ENCODE measurements at regions of chr15 and their contacts with region 1.

Region 1: DNA sequence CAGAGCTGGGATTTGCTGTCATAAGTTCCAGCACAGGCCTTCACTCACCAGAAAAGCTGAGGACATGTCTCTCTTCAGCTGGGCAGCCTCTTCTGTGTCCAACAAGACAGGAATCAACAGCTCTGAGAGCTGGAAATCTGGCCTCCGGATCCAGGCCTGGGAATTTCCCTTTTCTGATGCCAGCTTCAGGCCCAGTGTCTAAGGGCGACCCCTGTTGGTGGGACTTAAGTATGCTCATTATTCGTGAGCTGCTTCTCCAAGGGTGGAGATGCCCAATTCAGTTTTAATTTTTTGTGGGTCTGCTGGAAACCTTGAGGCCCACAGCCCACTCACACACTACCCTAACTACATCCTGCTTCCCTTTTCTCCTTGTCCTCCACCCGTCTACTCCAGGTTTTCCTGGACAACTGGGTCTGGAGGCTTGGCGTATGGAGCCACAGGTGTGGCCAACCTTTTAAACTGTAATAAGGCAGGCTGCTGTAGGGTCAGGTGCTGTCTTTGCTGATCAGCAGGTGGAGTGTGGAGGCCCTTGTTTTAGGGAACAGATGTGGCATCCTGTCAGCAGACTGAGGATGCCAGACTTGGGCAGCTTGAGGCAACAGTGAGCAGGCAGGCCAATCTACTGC is 2.6 kb upstream of the CEMIP start:
- DNase-seq: peak; percentile 60 to 80
- ATAC-seq: peak; percentile 71 to 85 (median 74)
- H3K4me3 ChIP-seq: no peak overlapping the region
- H3K4me3 Mint-ChIP-seq: no peak overlapping the region
- H3K27ac ChIP-seq: no peak overlapping the region
- H3K27ac Mint-ChIP-seq: no peak overlapping the region
- H3K4me1 ChIP-seq: peaks cover 4% of the 10 kb centered on the region
- H3K4me1 Mint-ChIP-seq: peaks cover 0 to 9% of the 10 kb centered on the region in 2 donors
- H3K27me3 ChIP-seq: peaks cover 10% of the 10 kb centered on the region
- H3K27me3 Mint-ChIP-seq: peaks cover 20 to 33% of the 10 kb centered on the region in 2 donors
- CTCF ChIP-seq: peak; percentile 81

Region 2: DNA sequence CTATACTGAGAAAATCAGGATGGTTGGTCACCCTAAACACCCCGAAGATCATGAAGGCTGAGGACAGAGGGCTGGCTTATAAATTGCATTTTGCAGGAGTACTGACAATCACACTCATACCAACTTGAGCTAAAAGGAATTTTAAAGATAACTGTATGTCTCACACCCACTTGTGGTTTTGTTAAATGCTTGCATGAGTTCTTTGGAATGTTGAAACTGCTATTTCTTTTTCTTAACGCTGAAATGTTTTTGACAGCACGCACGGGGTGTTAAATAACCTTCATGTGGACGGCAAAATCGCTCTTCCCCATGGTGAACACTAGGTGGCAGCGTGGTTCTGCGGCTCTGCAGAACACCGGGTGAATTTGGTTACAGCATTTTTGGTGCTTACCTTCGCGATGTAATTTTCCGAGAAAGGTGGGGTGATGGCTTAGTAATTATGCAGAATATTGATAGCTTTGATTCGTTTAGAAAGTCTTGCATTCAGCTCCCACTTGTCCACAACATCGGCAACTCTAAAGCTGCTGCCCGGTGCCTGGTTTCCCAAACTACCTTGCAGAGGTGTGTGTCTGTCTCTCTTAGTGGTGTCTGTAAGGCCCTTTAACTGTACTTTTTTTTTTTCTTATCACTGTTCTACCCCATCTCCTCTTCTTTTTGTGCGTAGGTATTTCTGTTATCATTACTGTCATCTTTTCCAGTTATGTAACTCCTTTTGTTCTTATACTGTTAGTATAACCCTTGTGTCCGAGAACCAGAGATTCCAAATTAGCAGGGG is 320.7 kb before region 1 on chr15:
- intact Hi-C with region 1: loop called (anchors 1 kb)
- DNase-seq: peak; percentile 30 to 83
- ATAC-seq: peak; percentile 60 to 87 (median 74)
- H3K4me3 ChIP-seq: no peak overlapping the region
- H3K4me3 Mint-ChIP-seq: no peak overlapping the region
- H3K27ac ChIP-seq: no peak overlapping the region
- H3K27ac Mint-ChIP-seq: no peak overlapping the region
- H3K4me1 ChIP-seq: no peaks in the 10 kb centered on the region
- H3K4me1 Mint-ChIP-seq: peaks cover 0 to 6% of the 10 kb centered on the region in 2 donors
- H3K27me3 ChIP-seq: no peaks in the 10 kb centered on the region
- H3K27me3 Mint-ChIP-seq: peaks cover 14 to 25% of the 10 kb centered on the region in 2 donors
- CTCF ChIP-seq: peak; percentile 87

Region 3: DNA sequence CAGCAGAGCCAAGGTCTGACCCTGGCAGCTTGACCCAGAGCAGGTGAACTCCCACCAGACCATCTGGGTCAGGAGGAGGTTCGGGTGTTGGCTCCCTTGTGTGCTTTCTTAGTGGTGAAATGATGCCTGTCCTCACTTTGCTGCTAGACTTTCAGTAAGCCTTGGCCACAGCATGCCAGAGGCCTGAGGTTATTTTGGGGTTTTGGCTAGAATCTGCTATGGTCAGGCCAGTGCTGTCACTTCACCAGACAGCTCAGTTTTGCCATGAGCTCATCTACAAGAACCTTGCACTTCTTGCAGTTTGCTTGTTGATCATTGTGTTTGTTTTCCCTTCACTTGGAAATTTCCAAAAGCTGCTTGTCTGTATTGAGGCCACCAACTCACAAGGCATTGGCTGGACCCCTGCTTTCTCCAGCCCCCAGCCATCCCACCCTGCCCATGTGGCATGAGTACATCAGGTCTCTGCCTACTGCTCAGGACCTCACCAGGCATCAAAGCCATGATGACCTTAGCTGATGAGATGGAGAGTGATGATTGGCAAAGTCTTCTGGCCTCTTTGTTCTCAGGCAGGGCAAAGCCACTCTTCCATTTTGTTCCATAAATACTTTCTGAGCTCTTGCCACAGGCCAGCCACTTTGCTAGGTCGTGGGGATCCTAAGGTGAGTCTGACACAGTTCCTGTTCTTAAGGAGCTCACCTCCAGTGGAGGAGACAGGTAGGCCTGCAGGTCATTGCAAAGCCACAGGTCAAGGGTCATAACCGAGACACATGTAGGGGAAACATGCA is 249.8 kb before region 1 on chr15:
- intact Hi-C with region 1: no loop called
- DNase-seq: no peak
- ATAC-seq: no peak
- H3K4me3 ChIP-seq: no peak overlapping the region
- H3K4me3 Mint-ChIP-seq: no peak overlapping the region
- H3K27ac ChIP-seq: no peak overlapping the region
- H3K27ac Mint-ChIP-seq: no peak overlapping the region
- H3K4me1 ChIP-seq: no peaks in the 10 kb centered on the region
- H3K4me1 Mint-ChIP-seq: no peaks in the 10 kb centered on the region
- H3K27me3 ChIP-seq: no peaks in the 10 kb centered on the region
- H3K27me3 Mint-ChIP-seq: peaks cover 17 to 33% of the 10 kb centered on the region in 2 donors
- CTCF ChIP-seq: no peak

Region 4: GRCh38 chr15:80567721-80568157 is 208.8 kb before region 1 on chr15:
- intact Hi-C with region 1: loop called (anchors 2 kb)
- DNase-seq: peak in 1 of 2 donors; percentile 52
- ATAC-seq: peak in 2 of 3 donors; percentile 36 to 55
- H3K4me3 ChIP-seq: no peak overlapping the region
- H3K4me3 Mint-ChIP-seq: no peak overlapping the region
- H3K27ac ChIP-seq: no peak overlapping the region
- H3K27ac Mint-ChIP-seq: no peak overlapping the region
- H3K4me1 ChIP-seq: no peaks in the 10 kb centered on the region
- H3K4me1 Mint-ChIP-seq: peaks cover 7 to 14% of the 10 kb centered on the region in 2 donors
- H3K27me3 ChIP-seq: no peaks in the 10 kb centered on the region
- H3K27me3 Mint-ChIP-seq: peaks cover 27 to 51% of the 10 kb centered on the region in 2 donors
- CTCF ChIP-seq: no peak

Region 5: GRCh38 chr15:80615761-80616391 is 160.7 kb before region 1 on chr15:
- intact Hi-C with region 1: loop called (anchors 10 kb)
- DNase-seq: no peak
- ATAC-seq: no peak
- H3K4me3 ChIP-seq: no peak overlapping the region
- H3K4me3 Mint-ChIP-seq: no peak overlapping the region
- H3K27ac ChIP-seq: no peak overlapping the region
- H3K27ac Mint-ChIP-seq: no peak overlapping the region
- H3K4me1 ChIP-seq: no peaks in the 10 kb centered on the region
- H3K4me1 Mint-ChIP-seq: no peaks in the 10 kb centered on the region
- H3K27me3 ChIP-seq: no peaks in the 10 kb centered on the region
- H3K27me3 Mint-ChIP-seq: peaks cover 21 to 27% of the 10 kb centered on the region in 2 donors
- CTCF ChIP-seq: no peak

Region 6: DNA sequence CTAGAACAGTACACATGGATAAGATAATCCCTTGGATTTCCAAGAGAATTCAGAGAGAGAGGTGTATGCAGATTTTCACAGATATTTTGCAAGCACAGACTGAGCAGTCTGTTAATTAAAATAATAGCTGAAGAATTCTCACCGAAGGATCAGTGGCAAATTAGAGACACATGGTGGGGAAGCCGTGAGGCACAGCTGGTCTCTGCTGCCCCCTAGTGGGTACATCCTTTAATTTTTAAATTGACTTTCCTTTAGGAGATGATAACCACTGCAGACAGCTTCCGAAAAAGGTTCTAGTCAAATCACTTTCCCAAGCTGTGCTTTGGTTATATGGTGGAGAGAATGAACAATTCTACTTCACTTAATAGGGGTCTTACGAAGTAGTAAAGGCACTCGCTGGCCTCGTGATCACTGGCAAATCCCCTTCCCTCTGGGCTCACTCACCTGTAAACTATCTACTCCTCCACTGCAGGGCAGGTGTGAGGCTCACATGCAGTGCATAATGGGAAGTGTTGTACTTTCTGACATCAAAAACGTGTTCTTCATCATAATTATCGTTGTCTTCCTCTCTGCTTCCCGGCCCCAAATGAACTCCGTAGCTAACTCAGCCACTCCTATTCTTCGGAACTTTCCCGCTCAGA is 193.6 kb after region 1 on chr15:
- intact Hi-C with region 1: loop called (anchors 1 kb)
- DNase-seq: peak; percentile 46 to 83
- ATAC-seq: peak; percentile 61 to 81 (median 76)
- H3K4me3 ChIP-seq: no peak overlapping the region
- H3K4me3 Mint-ChIP-seq: no peak overlapping the region
- H3K27ac ChIP-seq: no peak overlapping the region
- H3K27ac Mint-ChIP-seq: no peak overlapping the region
- H3K4me1 ChIP-seq: peaks cover 3% of the 10 kb centered on the region
- H3K4me1 Mint-ChIP-seq: peaks cover 25% of the 10 kb centered on the region in 2 donors
- H3K27me3 ChIP-seq: no peaks in the 10 kb centered on the region
- H3K27me3 Mint-ChIP-seq: no peaks in the 10 kb centered on the region
- CTCF ChIP-seq: peak; percentile 94

Measured in natural killer cell (primary cell).